ENCODE measurements at regions of chr15 and their contacts with region 1.

Region 1: DNA sequence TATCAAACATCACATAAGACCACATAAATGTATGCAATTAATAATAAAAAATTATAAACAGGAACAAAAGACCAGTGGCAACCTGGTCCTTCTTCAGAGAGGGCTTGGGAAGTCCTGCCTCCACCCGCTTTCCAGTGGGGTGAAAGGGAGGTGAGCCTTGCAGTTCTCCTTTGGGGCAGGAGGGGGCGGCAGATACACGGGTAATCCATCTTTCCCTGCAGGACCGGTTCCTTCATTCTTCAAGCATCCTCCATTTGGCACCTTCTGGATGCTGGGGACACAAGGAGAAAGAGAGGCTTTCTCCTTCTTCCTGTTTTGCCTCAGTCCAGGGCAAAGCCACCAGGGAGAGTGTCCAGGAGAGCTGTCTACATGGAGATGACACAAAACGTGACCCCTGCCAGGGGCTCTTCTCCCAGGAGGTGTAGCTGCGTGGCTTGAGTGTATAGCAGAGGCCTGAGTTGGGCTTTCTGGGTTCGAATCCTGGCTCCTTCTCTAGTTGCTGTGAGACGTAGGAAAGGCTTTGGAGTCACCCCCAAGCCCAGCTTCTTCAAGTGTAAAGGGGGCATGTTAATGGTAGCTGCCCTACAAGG is 23.2 kb downstream of the RPLP1 start:
- DNase-seq: peak; percentile 42
- ATAC-seq: peak; percentile 88
- H3K4me3 ChIP-seq: no peak overlapping the region
- H3K27ac ChIP-seq: no peak overlapping the region
- H3K4me1 ChIP-seq: no peaks in the 10 kb centered on the region
- H3K27me3 ChIP-seq: no peaks in the 10 kb centered on the region
- CTCF ChIP-seq: peak; percentile 61 to 97 (median 83); a peak in 5 of 6 replicates
- POLR2A ChIP-seq: no peak
- RAD21 ChIP-seq: peak; percentile 88

Region 2: GRCh38 chr15:69576035-69576526 is 100.2 kb after region 1 on chr15:
- CTCF ChIA-PET with region 1: interaction called, 4 read pairs
- POLR2A ChIA-PET with region 1: no interaction called
- RAD21 ChIA-PET with region 1: no interaction called
- intact Hi-C with region 1: loop called (anchors 5 kb)
- DNase-seq: peak; percentile 15
- ATAC-seq: peak; percentile 94
- H3K4me3 ChIP-seq: no peak overlapping the region
- H3K27ac ChIP-seq: no peak overlapping the region
- H3K4me1 ChIP-seq: no peaks in the 10 kb centered on the region
- H3K27me3 ChIP-seq: peaks cover 5% of the 10 kb centered on the region; the same call in 1 of the 2 replicates
- CTCF ChIP-seq: peak; percentile 62 to 89 (median 83); a peak in 5 of 6 replicates
- POLR2A ChIP-seq: no peak
- RAD21 ChIP-seq: peak; percentile 82

Region 3: GRCh38 chr15:70097337-70098169 is 621.7 kb after region 1 on chr15 and contains the start of gene TLE3:
- CTCF ChIA-PET with region 1: interaction called, 4 read pairs
- POLR2A ChIA-PET with region 1: no interaction called
- RAD21 ChIA-PET with region 1: no interaction called
- intact Hi-C with region 1: loop called (anchors 5 kb)
- DNase-seq: peak; percentile 95
- ATAC-seq: peak; percentile 67
- H3K4me3 ChIP-seq: peak within 1 kb of the TSS; percentile 70 to 93
- H3K27ac ChIP-seq: peak within 1 kb of the TSS; percentile 95
- H3K4me1 ChIP-seq: peaks cover 25 to 53% of the 10 kb centered on the region in 2 experiments
- H3K27me3 ChIP-seq: no peaks in the 10 kb centered on the region
- CTCF ChIP-seq: 0 out of 6 replicates have a peak, but pooled peaks of 1 of the 3 experiments have one; percentile 10
- POLR2A ChIP-seq: peak; percentile 86
- RAD21 ChIP-seq: no peak
- total RNA-seq, gene TLE3: 53.9 TPM

Region 4: DNA sequence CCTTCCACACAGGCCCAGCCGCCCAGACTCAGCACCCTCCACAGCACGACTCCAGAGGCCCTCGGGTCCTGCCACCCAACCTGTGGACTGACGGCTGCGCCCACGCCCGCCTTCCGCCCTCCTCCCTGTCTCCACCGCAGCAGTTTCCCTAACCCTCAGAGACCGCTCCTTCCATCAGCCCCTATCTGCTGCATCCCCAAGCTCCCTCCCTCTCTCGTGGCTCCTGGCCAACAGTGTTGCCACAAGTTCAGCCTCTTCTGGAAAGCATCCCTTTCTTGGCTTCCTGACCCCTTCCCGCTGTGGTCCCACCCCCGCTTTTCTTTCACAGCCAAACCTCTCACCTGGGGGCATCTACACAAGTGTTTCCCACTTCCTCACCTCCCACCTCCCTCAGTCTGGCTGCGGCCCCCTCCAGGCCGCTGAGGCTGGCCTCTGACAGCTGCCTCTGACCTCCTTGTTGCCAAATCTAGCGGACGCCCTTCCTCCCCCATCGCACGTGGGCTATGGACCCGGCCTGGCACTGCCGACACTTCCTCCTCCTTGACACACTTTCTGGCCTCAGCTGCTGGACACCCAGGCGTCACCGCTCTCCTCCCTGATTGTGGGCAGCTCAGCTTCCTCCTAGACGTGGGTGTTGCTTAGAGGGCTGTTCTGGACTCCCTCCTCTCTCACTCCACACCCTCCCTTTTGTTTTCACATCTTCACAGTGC is 790.7 kb after region 1 on chr15:
- CTCF ChIA-PET with region 1: no interaction called
- POLR2A ChIA-PET with region 1: no interaction called
- RAD21 ChIA-PET with region 1: no interaction called
- intact Hi-C with region 1: loop called (anchors 5 kb)
- DNase-seq: no peak
- ATAC-seq: no peak
- H3K4me3 ChIP-seq: no peak overlapping the region
- H3K27ac ChIP-seq: no peak overlapping the region
- H3K4me1 ChIP-seq: peaks cover 9 to 37% of the 10 kb centered on the region in 2 experiments
- H3K27me3 ChIP-seq: peaks cover 20% of the 10 kb centered on the region; the same call in 1 of the 2 replicates
- CTCF ChIP-seq: no peak
- POLR2A ChIP-seq: no peak
- RAD21 ChIP-seq: no peak

Region 5: GRCh38 chr15:70466895-70467529 is 991.1 kb after region 1 on chr15:
- CTCF ChIA-PET with region 1: interaction called, 10 read pairs
- POLR2A ChIA-PET with region 1: no interaction called
- RAD21 ChIA-PET with region 1: no interaction called
- intact Hi-C with region 1: no loop called
- DNase-seq: peak; percentile 37
- ATAC-seq: peak; percentile 98
- H3K4me3 ChIP-seq: no peak overlapping the region
- H3K27ac ChIP-seq: no peak overlapping the region
- H3K4me1 ChIP-seq: no peaks in the 10 kb centered on the region
- H3K27me3 ChIP-seq: peaks cover 5% of the 10 kb centered on the region; the same call in 1 of the 2 replicates
- CTCF ChIP-seq: peak; percentile 62 to 81 (median 75)
- POLR2A ChIP-seq: no peak
- RAD21 ChIP-seq: peak; percentile 66; the same call in 1 of the 2 replicates

Region 6: DNA sequence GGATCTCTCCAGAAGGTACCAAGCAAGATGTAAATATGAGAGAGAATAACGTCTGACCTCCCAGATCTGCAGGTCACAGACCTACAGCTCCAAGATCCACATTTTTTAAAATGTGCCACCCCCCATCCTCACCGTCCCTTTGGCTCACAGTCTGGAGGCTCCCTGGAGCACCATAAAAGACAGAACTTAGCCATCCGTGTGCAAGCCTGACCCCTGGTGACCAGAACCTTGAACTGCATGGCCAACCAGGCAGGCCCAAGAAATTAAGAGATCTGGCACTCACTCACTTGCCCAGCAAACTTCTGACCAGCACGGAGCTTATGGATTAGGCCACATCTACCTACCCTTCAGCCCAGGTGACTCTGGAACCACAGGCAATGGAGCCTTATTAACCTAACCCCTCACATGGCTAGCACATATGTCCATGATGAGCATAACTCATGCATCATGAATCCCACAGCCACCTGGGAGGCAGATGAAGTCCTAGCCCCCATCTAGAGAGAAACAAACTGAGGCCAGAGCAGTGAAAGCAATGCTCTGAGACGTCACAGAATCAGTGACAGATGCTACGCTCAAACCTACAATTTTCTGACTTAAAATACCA is 1012.2 kb after region 1 on chr15:
- CTCF ChIA-PET with region 1: interaction called, 3 read pairs
- POLR2A ChIA-PET with region 1: no interaction called
- RAD21 ChIA-PET with region 1: no interaction called
- intact Hi-C with region 1: loop called (anchors 5 kb)
- DNase-seq: no peak
- ATAC-seq: peak; percentile 71
- H3K4me3 ChIP-seq: no peak overlapping the region
- H3K27ac ChIP-seq: no peak overlapping the region
- H3K4me1 ChIP-seq: peaks cover 14 to 18% of the 10 kb centered on the region in 2 experiments
- H3K27me3 ChIP-seq: peaks cover 4% of the 10 kb centered on the region; the same call in 1 of the 2 replicates
- CTCF ChIP-seq: peak in 2 of 3 experiments; percentile 95 to 97; a peak in 4 of 6 replicates
- POLR2A ChIP-seq: no peak
- RAD21 ChIP-seq: no peak

Measured in HCT116 (cell line).